CD4-positive, alpha-beta T cell (primary cell): ENCODE measurements at regions of chr16 and their contacts with region 1.

Region 1: GRCh38 chr16:84504420-84505248 is at the start of gene MEAK7:
- DNase-seq: peak; percentile 95 to 98 (median 98)
- ATAC-seq: peak; percentile 95
- H3K4me3 ChIP-seq: peak within 1 kb of the TSS; percentile 85
- H3K4me3 Mint-ChIP-seq: peak within 1 kb of the TSS; percentile 93
- H3K27ac ChIP-seq: peak within 1 kb of the TSS; percentile 34 to 46
- H3K27ac Mint-ChIP-seq: peak within 1 kb of the TSS; percentile 90
- H3K4me1 ChIP-seq: peaks cover 64% of the 10 kb centered on the region
- H3K4me1 Mint-ChIP-seq: peaks cover 62% of the 10 kb centered on the region
- H3K27me3 ChIP-seq: no peaks in the 10 kb centered on the region
- H3K27me3 Mint-ChIP-seq: no peaks in the 10 kb centered on the region
- CTCF ChIP-seq: no peak
- total RNA-seq, gene MEAK7: 1.9 to 3.7 TPM

Region 2: GRCh38 chr16:83956336-83957289 is 548.0 kb before region 1 on chr16:
- CTCF ChIA-PET with region 1: no interaction called
- POLR2A ChIA-PET with region 1: no interaction called
- intact Hi-C with region 1: loop called in 1 of 2 experiments (anchors 5 kb)
- DNase-seq: peak; percentile 44 to 78 (median 58)
- ATAC-seq: peak; percentile 52
- H3K4me3 ChIP-seq: no peak overlapping the region
- H3K4me3 Mint-ChIP-seq: no peak overlapping the region
- H3K27ac ChIP-seq: no peak overlapping the region
- H3K27ac Mint-ChIP-seq: no peak overlapping the region
- H3K4me1 ChIP-seq: peaks cover 17% of the 10 kb centered on the region
- H3K4me1 Mint-ChIP-seq: peaks cover 12% of the 10 kb centered on the region
- H3K27me3 ChIP-seq: peaks cover 36 to 39% of the 10 kb centered on the region in 2 experiments
- H3K27me3 Mint-ChIP-seq: peaks cover 33% of the 10 kb centered on the region
- CTCF ChIP-seq: peak; percentile 70

Region 3: GRCh38 chr16:84266451-84266850 is 238.2 kb before region 1 on chr16:
- CTCF ChIA-PET with region 1: no interaction called
- POLR2A ChIA-PET with region 1: no interaction called
- intact Hi-C with region 1: no loop called
- DNase-seq: peak in 3 of 14 experiments; percentile 28 to 54 (median 47)
- ATAC-seq: peak; percentile 54
- H3K4me3 ChIP-seq: no peak overlapping the region
- H3K4me3 Mint-ChIP-seq: no peak overlapping the region
- H3K27ac ChIP-seq: no peak overlapping the region
- H3K27ac Mint-ChIP-seq: no peak overlapping the region
- H3K4me1 ChIP-seq: peaks cover 2% of the 10 kb centered on the region
- H3K4me1 Mint-ChIP-seq: no peaks in the 10 kb centered on the region
- H3K27me3 ChIP-seq: peaks cover 0 to under 1% of the 10 kb centered on the region in 2 experiments
- H3K27me3 Mint-ChIP-seq: peaks cover 22% of the 10 kb centered on the region
- CTCF ChIP-seq: no peak

Region 4: GRCh38 chr16:84970447-84971127 is 466.0 kb after region 1 on chr16:
- CTCF ChIA-PET with region 1: no interaction called
- POLR2A ChIA-PET with region 1: no interaction called
- intact Hi-C with region 1: loop called in 1 of 2 experiments (anchors 10 kb)
- DNase-seq: peak; percentile 66 to 91 (median 74)
- ATAC-seq: peak; percentile 99
- H3K4me3 ChIP-seq: no peak overlapping the region
- H3K4me3 Mint-ChIP-seq: no peak overlapping the region
- H3K27ac ChIP-seq: no peak overlapping the region
- H3K27ac Mint-ChIP-seq: no peak overlapping the region
- H3K4me1 ChIP-seq: peaks cover 9% of the 10 kb centered on the region
- H3K4me1 Mint-ChIP-seq: peaks cover 6% of the 10 kb centered on the region
- H3K27me3 ChIP-seq: no peaks in the 10 kb centered on the region
- H3K27me3 Mint-ChIP-seq: no peaks in the 10 kb centered on the region
- CTCF ChIP-seq: peak; percentile 91